ENCODE measurements at regions of chr15 and their contacts with region 1.

Region 1: DNA sequence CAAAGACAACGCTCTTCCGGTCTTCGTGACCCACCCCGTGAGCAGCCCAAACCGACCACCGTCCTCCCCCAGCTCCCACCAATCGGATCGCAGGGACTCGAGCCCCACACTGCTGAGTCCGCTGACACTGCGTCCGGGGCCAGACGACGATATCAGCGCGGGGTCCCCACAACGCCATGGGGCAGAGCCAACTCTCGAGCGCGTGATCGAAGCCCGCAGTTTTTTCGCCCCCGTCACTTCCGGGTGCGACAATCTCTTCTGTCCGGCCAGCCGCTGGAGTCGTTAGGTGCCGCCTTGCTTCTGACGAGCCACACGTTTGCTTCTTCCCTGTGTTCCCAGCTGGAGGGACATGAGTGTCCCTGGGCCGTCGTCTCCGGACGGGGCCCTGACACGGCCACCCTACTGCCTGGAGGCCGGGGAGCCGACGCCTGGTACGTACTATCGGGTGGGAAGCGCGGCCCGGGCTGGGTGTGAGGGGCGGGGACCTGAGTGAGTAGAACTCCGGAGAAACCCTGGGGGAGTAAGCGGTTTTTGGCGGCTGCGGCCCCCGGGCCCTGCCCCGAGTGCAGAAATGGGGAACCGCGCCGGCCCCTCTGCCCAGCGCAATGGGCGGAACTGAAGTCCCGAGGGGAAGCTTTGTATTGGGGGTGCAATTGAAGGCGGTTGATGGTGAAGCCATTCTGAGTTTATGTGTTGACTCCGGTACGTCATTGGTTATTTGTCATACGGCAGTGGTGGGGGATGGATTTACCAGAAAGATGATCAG is at the start of gene BLOC1S6:
- DNase-seq: peak; percentile 93
- ATAC-seq: peak; percentile 96
- total RNA-seq, gene BLOC1S6: 21.9 TPM

Region 2: GRCh38 chr15:45549541-45550220 is 37.6 kb before region 1 on chr15:
- intact Hi-C with region 1: no loop called
- DNase-seq: no peak
- ATAC-seq: no peak

Region 3: DNA sequence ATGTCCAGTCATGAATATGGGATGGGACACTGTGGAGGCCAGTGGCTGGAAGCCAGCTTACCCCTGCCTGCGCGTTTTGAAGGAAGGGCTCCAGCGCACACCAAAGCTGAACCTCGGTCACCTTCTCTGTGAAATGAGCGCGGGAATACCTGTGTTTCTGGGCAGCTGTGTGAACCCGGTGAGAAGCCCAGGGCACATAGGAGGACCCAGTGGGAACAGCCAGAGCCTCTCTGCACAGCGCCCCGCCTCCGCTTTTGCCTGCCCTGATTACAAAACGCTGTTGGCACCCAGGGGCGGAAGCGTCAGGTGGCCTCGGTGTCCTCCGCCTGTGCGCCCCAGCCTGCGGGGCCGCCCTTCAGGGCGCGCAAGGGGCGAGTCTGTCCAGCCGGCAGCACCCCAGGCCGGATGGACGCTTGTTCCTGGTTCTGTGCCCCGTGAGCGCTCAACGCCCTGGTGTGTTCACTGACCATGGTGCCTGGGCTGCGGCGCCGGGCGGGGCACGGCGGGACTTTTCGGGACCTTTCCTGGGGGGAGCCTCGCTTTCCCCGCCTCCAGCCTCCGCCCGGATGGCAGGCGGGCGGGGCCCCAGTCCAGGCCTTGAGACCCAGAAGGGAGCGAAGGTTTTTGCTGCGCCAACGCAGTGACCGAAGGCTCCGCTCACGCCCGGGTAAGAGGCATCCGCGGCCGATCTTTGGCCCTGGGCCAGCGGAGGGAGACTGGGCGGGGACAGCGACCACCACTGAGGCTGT is 47.3 kb after region 1 on chr15 and contains the start of gene SQOR:
- intact Hi-C with region 1: loop called (anchors 5 kb)
- DNase-seq: peak; percentile 94
- ATAC-seq: peak; percentile 90
- total RNA-seq, gene SQOR: 18.5 TPM

Measured in Right ventricle myocardium superior (tissue), 1 donor.